ENCODE measurements at regions of chr5 and their contacts with region 1.

Region 1: GRCh38 chr5:134555890-134556311 is 30.4 kb downstream of the JADE2 start:
- DNase-seq: peak; percentile 89
- H3K4me3 Mint-ChIP-seq: peak overlapping the region; percentile 35
- H3K27ac Mint-ChIP-seq: peak overlapping the region; percentile 90
- H3K4me1 Mint-ChIP-seq: peaks cover 33% of the 10 kb centered on the region
- H3K27me3 Mint-ChIP-seq: no peaks in the 10 kb centered on the region

Region 2: GRCh38 chr5:134370871-134371833 is 184.7 kb before region 1 on chr5 and contains the start of gene UBE2B:
- CTCF ChIA-PET with region 1: no interaction called
- POLR2A ChIA-PET with region 1: interaction called, 10 read pairs
- DNase-seq: peak; percentile 98
- H3K4me3 Mint-ChIP-seq: peak within 1 kb of the TSS; percentile 97
- H3K27ac Mint-ChIP-seq: peak within 1 kb of the TSS; percentile 98
- H3K4me1 Mint-ChIP-seq: peaks cover 46% of the 10 kb centered on the region
- H3K27me3 Mint-ChIP-seq: peaks cover 2% of the 10 kb centered on the region
- total RNA-seq, gene UBE2B: 115 to 116 TPM

Region 3: GRCh38 chr5:134493461-134494055 is 62.3 kb before region 1 on chr5:
- CTCF ChIA-PET with region 1: no interaction called
- POLR2A ChIA-PET with region 1: no interaction called
- DNase-seq: no peak
- H3K4me3 Mint-ChIP-seq: no peak overlapping the region
- H3K27ac Mint-ChIP-seq: no peak overlapping the region
- H3K4me1 Mint-ChIP-seq: no peaks in the 10 kb centered on the region
- H3K27me3 Mint-ChIP-seq: no peaks in the 10 kb centered on the region

Region 4: DNA sequence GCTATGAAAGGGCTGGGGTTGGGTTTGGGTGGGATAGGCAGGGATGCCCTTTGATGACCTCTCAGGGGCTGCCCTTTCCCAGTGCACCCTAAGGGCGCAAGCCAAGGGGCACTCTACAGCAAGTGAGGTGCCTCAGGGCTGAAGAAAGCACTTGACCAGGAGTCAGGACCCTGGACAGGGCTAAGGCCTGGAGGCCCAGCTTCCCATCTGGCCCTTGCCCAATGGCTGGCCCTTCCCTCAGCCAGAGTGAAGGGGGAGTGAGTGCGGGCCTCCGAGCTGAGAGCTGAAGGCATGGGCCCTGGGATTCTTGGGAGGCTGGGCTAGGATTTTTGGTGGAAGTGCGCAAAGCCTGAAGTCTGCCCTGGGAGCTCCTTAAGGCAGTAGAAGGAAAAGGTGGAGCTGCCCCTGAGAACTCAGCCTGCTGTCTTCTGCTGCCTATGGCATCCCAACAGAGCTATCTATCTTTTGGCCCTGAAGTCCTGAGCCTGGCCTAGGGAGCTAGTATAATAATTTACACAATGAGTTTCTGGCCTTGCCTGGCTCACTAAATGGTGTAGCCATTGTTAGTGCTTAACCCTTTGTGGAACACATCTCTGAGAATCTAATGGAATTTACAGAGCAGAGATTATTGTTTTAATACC is 14.0 kb before region 1 on chr5:
- CTCF ChIA-PET with region 1: interaction called, 5 read pairs
- POLR2A ChIA-PET with region 1: interaction called, 32 read pairs
- DNase-seq: no peak
- H3K4me3 Mint-ChIP-seq: no peak overlapping the region
- H3K27ac Mint-ChIP-seq: no peak overlapping the region
- H3K4me1 Mint-ChIP-seq: peaks cover 43% of the 10 kb centered on the region
- H3K27me3 Mint-ChIP-seq: no peaks in the 10 kb centered on the region